Breast epithelium (tissue), 4 donors: ENCODE measurements at regions of chr4 and their contacts with region 1.

Region 1: DNA sequence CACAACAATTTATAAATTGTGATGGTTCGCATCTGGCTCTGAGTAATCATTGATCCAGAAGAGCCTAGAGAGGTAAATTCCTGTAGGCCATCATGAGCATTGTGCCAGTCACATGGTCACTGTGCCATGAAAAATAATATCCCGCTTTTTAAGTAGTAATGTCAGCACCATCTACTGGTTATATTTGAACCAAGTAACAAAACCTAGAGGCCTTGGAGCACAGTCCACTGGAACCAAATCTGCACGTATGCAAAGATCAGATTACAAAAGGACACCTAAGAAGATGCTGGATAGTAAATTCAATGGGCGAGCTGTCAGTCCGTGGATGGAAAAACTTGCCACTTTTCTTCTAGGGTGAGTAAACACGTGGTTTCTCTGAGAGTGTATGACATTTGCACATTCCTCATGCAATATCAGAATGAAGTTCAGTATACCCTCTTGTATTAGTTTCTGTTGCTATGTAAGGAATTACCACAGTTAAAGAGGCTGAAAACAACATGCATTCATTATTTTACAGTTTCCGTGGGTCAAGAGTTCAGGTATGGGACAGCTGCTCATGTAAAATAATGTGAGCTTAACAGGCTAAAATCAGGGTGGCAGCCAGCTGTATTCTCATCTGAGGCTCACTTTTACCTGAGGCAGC is 26.9 kb downstream of the FAM114A1 start:
- DNase-seq: no peak
- H3K4me3 ChIP-seq: no peak overlapping the region
- H3K27ac ChIP-seq: no peak overlapping the region
- H3K4me1 ChIP-seq: no peaks in the 10 kb centered on the region
- H3K27me3 ChIP-seq: no peaks in the 10 kb centered on the region
- CTCF ChIP-seq: no peak
- POLR2A ChIP-seq: no peak

Region 2: GRCh38 chr4:38141808-38142500 is 752.5 kb before region 1 on chr4:
- intact Hi-C with region 1: loop called (anchors 5 kb)
- DNase-seq: no peak
- H3K4me3 ChIP-seq: no peak overlapping the region
- H3K27ac ChIP-seq: peak overlapping the region in 1 of 2 donors; percentile 33
- H3K4me1 ChIP-seq: no peaks in the 10 kb centered on the region
- H3K27me3 ChIP-seq: no peaks in the 10 kb centered on the region
- CTCF ChIP-seq: no peak
- POLR2A ChIP-seq: no peak